ENCODE measurements at regions of chr7 and their contacts with region 1.

Region 1: GRCh38 chr7:130733931-130734814 is at the start of gene KLF14:
- DNase-seq: peak; percentile 77
- ATAC-seq: peak; percentile 64
- H3K4me3 ChIP-seq: peak within 1 kb of the TSS; percentile 45 to 82 (median 64)
- H3K4me3 Mint-ChIP-seq: peak within 1 kb of the TSS; percentile 90
- H3K27ac ChIP-seq: peak within 1 kb of the TSS in 1 of 2 donors; percentile 40
- H3K27ac Mint-ChIP-seq: peak within 1 kb of the TSS; percentile 73
- H3K4me1 ChIP-seq: peaks cover 9 to 16% of the 10 kb centered on the region in 2 donors
- H3K4me1 Mint-ChIP-seq: peaks cover 10% of the 10 kb centered on the region
- H3K27me3 ChIP-seq: peaks cover 0 to 65% (median 54%) of the 10 kb centered on the region in 4 experiments
- H3K27me3 Mint-ChIP-seq: peaks cover 72% of the 10 kb centered on the region
- CTCF ChIP-seq: no peak
- total RNA-seq, gene KLF14: 0.19 and 0.27 TPM in 2 replicates

Region 2: GRCh38 chr7:130205084-130205947 is 528.9 kb before region 1 on chr7 and contains the start of gene TMEM209:
- CTCF ChIA-PET with region 1: no interaction called
- POLR2A ChIA-PET with region 1: no interaction called
- intact Hi-C with region 1: loop called (anchors 10 kb)
- DNase-seq: peak; percentile 96
- ATAC-seq: peak; percentile 97
- H3K4me3 ChIP-seq: peak within 1 kb of the TSS; percentile 83 to 100 (median 89)
- H3K4me3 Mint-ChIP-seq: peak within 1 kb of the TSS; percentile 97
- H3K27ac ChIP-seq: peak within 1 kb of the TSS; percentile 86 to 87
- H3K27ac Mint-ChIP-seq: peak within 1 kb of the TSS; percentile 96
- H3K4me1 ChIP-seq: peaks cover 4 to 14% of the 10 kb centered on the region in 2 donors
- H3K4me1 Mint-ChIP-seq: peaks cover 15% of the 10 kb centered on the region
- H3K27me3 ChIP-seq: no peaks in the 10 kb centered on the region
- H3K27me3 Mint-ChIP-seq: peaks cover 6% of the 10 kb centered on the region
- CTCF ChIP-seq: no peak
- total RNA-seq, gene TMEM209: 33.2 and 35.8 TPM in 2 replicates

Region 3: GRCh38 chr7:130440527-130441365 is 293.4 kb before region 1 on chr7 and contains the start of gene CEP41:
- CTCF ChIA-PET with region 1: no interaction called
- POLR2A ChIA-PET with region 1: no interaction called
- intact Hi-C with region 1: loop called (anchors 2 kb)
- DNase-seq: peak; percentile 93
- ATAC-seq: peak; percentile 97
- H3K4me3 ChIP-seq: peak within 1 kb of the TSS; percentile 26 to 90 (median 87)
- H3K4me3 Mint-ChIP-seq: peak within 1 kb of the TSS; percentile 99
- H3K27ac ChIP-seq: peak within 1 kb of the TSS; percentile 66 to 68
- H3K27ac Mint-ChIP-seq: peak within 1 kb of the TSS; percentile 96
- H3K4me1 ChIP-seq: peaks cover 4 to 10% of the 10 kb centered on the region in 2 donors
- H3K4me1 Mint-ChIP-seq: peaks cover 13% of the 10 kb centered on the region
- H3K27me3 ChIP-seq: no peaks in the 10 kb centered on the region
- H3K27me3 Mint-ChIP-seq: peaks cover 6% of the 10 kb centered on the region
- CTCF ChIP-seq: no peak
- total RNA-seq, gene CEP41: 5.9 and 6.1 TPM in 2 replicates

Region 4: DNA sequence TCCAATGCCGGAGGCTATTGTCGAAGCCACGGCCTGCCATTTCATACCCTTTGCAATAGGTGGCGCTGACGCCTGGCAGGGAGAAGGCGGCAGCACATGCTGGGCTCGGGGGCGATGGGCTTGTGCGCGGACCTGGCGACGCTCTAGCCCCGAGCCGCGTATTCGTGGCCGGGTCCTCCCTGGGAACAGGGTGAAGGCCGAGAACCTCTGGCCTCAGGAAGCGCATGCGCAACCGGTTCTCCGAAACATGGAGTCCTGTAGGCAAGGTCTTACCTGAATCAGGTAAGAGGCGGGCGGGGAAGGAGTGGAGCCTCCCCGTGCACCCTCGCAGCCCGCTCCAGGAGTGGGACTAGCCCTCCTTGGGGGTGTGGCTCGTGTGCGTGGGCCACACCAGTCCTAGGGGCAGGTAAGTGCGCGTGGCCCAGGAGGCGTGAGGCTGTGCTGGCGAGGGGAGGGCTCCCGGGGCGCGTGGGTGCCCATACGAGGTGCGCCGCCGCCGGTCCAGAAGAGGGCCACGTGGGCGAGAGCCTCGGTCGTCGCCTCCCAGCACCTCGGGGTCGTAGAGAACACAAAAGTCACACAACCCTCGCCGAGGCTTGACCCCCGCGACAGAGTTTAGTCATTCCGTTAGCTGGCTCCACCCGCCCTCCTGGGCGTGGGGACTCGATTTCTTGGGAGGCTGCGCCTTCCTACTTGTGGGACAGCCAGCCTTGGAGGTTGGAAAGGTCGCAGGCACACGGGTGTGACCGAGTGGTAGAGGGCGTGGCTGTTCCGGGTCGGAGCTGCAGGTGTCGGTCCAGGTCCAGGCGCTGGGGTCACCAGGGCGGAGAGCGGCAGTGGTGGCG is 247.8 kb before region 1 on chr7:
- CTCF ChIA-PET with region 1: no interaction called
- POLR2A ChIA-PET with region 1: no interaction called
- intact Hi-C with region 1: loop called (anchors 5 kb)
- DNase-seq: peak; percentile 77
- ATAC-seq: peak; percentile 89
- H3K4me3 ChIP-seq: peak overlapping the region in 4 of 5 experiments; percentile 52 to 73 (median 66)
- H3K4me3 Mint-ChIP-seq: peak overlapping the region; percentile 93
- H3K27ac ChIP-seq: no peak overlapping the region
- H3K27ac Mint-ChIP-seq: peak overlapping the region; percentile 74
- H3K4me1 ChIP-seq: peaks cover 22 to 24% of the 10 kb centered on the region in 2 donors
- H3K4me1 Mint-ChIP-seq: peaks cover 26% of the 10 kb centered on the region
- H3K27me3 ChIP-seq: peaks cover 0 to 32% (median 19%) of the 10 kb centered on the region in 4 experiments
- H3K27me3 Mint-ChIP-seq: peaks cover 53% of the 10 kb centered on the region
- CTCF ChIP-seq: peak; percentile 93

Region 5: GRCh38 chr7:130668257-130669084 is 65.7 kb before region 1 on chr7 and contains the start of gene COPG2:
- CTCF ChIA-PET with region 1: no interaction called
- POLR2A ChIA-PET with region 1: no interaction called
- intact Hi-C with region 1: loop called (anchors 2 kb)
- DNase-seq: peak; percentile 92
- ATAC-seq: peak; percentile 91
- H3K4me3 ChIP-seq: peak within 1 kb of the TSS; percentile 69 to 83 (median 74)
- H3K4me3 Mint-ChIP-seq: peak within 1 kb of the TSS; percentile 96
- H3K27ac ChIP-seq: peak within 1 kb of the TSS in 1 of 2 donors; percentile 66
- H3K27ac Mint-ChIP-seq: peak within 1 kb of the TSS; percentile 90
- H3K4me1 ChIP-seq: peaks cover 10 to 11% of the 10 kb centered on the region in 2 donors
- H3K4me1 Mint-ChIP-seq: peaks cover 15% of the 10 kb centered on the region
- H3K27me3 ChIP-seq: no peaks in the 10 kb centered on the region
- H3K27me3 Mint-ChIP-seq: peaks cover 11% of the 10 kb centered on the region
- CTCF ChIP-seq: no peak
- total RNA-seq, gene COPG2: 13.4 and 14.7 TPM in 2 replicates

Region 6: GRCh38 chr7:130758429-130759056 is 24.4 kb after region 1 on chr7:
- CTCF ChIA-PET with region 1: interaction called, 46 read pairs
- POLR2A ChIA-PET with region 1: interaction called, 4 read pairs
- intact Hi-C with region 1: loop called (anchors 1 kb)
- DNase-seq: peak; percentile 72
- ATAC-seq: peak; percentile 54
- H3K4me3 ChIP-seq: no peak overlapping the region
- H3K4me3 Mint-ChIP-seq: no peak overlapping the region
- H3K27ac ChIP-seq: no peak overlapping the region
- H3K27ac Mint-ChIP-seq: no peak overlapping the region
- H3K4me1 ChIP-seq: no peaks in the 10 kb centered on the region
- H3K4me1 Mint-ChIP-seq: no peaks in the 10 kb centered on the region
- H3K27me3 ChIP-seq: peaks cover 0 to 3% (median 0%) of the 10 kb centered on the region in 4 experiments
- H3K27me3 Mint-ChIP-seq: no peaks in the 10 kb centered on the region
- CTCF ChIP-seq: peak; percentile 93

Region 7: GRCh38 chr7:130777426-130777825 is 43.3 kb after region 1 on chr7:
- CTCF ChIA-PET with region 1: no interaction called
- POLR2A ChIA-PET with region 1: no interaction called
- intact Hi-C with region 1: no loop called
- DNase-seq: no peak
- ATAC-seq: no peak
- H3K4me3 ChIP-seq: no peak overlapping the region
- H3K4me3 Mint-ChIP-seq: no peak overlapping the region
- H3K27ac ChIP-seq: no peak overlapping the region
- H3K27ac Mint-ChIP-seq: no peak overlapping the region
- H3K4me1 ChIP-seq: no peaks in the 10 kb centered on the region
- H3K4me1 Mint-ChIP-seq: no peaks in the 10 kb centered on the region
- H3K27me3 ChIP-seq: peaks cover 0 to 4% (median 0%) of the 10 kb centered on the region in 4 experiments
- H3K27me3 Mint-ChIP-seq: peaks cover 39% of the 10 kb centered on the region
- CTCF ChIP-seq: no peak

Region 8: DNA sequence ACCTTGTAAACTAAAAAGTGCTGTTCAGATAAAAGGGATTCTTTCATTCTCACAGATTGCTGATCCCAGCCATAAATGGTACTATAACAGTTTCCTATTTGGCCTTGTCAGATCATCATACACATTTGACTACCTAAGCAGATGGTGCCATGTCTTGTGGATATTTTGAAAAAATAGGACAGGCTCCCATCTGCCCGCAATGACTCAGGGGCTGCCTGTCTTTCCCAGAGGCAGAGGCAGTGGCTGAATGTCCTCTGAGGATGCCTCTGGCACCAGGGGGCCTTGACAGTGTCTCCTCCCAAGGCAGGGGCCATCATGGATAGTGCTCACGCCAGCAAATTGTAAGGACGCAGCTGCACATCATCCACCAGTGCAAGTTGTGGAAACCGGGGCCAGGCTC is 1145.3 kb after region 1 on chr7:
- CTCF ChIA-PET with region 1: no interaction called
- POLR2A ChIA-PET with region 1: no interaction called
- intact Hi-C with region 1: no loop called
- DNase-seq: no peak
- ATAC-seq: no peak
- H3K4me3 ChIP-seq: no peak overlapping the region
- H3K4me3 Mint-ChIP-seq: no peak overlapping the region
- H3K27ac ChIP-seq: no peak overlapping the region
- H3K27ac Mint-ChIP-seq: no peak overlapping the region
- H3K4me1 ChIP-seq: no peaks in the 10 kb centered on the region
- H3K4me1 Mint-ChIP-seq: no peaks in the 10 kb centered on the region
- H3K27me3 ChIP-seq: no peaks in the 10 kb centered on the region
- H3K27me3 Mint-ChIP-seq: no peaks in the 10 kb centered on the region
- CTCF ChIP-seq: no peak

Measured in B cell (primary cell).